A673 (cell line): ENCODE measurements at regions of chr7 and their contacts with region 1.

Region 1: DNA sequence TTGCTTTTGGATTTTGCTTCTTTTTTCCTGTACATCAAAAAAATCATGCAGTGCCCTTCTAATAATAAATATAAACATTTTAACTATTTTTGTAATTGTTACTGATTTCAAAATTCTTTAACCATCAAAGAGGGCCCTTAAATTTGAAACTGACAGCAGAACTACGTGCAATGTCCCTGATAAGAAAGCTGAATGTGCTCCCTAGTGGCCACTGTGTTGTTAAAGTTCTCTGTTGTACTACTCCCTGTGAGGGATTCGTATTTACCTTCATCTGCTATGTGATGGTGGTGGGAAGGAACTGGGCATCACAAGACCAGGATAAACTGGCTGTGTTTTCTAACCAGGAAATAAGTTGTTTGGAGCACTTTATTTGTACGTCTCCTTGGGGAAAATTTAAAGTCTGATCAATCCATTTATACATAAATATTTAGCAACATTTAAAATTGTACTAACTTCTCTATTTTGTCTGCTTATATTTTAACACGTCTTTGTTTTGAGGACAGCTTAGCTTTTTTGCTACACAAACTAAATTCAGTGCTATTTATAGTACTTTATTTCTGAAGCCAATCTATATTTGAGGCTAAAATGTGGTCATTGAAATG is 322.4 kb downstream of the HGF start:
- DNase-seq: peak; percentile 69
- H3K4me3 ChIP-seq: no peak overlapping the region
- H3K27ac ChIP-seq: no peak overlapping the region
- H3K4me1 ChIP-seq: no peaks in the 10 kb centered on the region
- H3K27me3 ChIP-seq: no peaks in the 10 kb centered on the region
- CTCF ChIP-seq: peak; percentile 64

Region 2: GRCh38 chr7:81244224-81244623 is 203.2 kb before region 1 on chr7:
- CTCF ChIA-PET with region 1: no interaction called
- POLR2A ChIA-PET with region 1: no interaction called
- intact Hi-C with region 1: loop called (anchors 5 kb)
- DNase-seq: peak; percentile 68
- H3K4me3 ChIP-seq: no peak overlapping the region
- H3K27ac ChIP-seq: no peak overlapping the region
- H3K4me1 ChIP-seq: no peaks in the 10 kb centered on the region
- H3K27me3 ChIP-seq: no peaks in the 10 kb centered on the region
- CTCF ChIP-seq: peak; percentile 54